Mammary epithelial cell (primary cell): ENCODE measurements at regions of chr1 and their contacts with region 1.

Region 1: DNA sequence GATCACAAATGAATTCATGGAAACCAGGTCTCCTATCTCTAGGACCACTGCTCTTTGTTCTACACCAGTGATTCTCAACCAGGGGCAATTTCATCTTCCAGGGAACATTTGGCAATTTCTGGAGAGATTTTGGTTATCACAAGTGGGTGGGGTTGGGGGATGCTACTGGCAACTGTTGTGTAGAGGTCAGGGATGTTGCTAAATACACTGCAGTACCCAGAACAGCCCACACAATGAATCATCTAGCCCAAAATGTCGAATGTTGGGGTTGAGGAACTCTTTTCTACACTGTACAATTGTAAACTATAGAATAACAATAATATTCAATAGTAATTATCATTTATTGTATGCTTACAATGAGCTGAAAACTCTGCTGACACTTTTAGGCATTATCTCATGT is 55.7 kb upstream of the UBE2U start:
- DNase-seq: no peak
- H3K4me3 ChIP-seq: no peak overlapping the region
- H3K27ac ChIP-seq: no peak overlapping the region
- H3K4me1 ChIP-seq: no peaks in the 10 kb centered on the region
- H3K27me3 ChIP-seq: no peaks in the 10 kb centered on the region
- CTCF ChIP-seq: no peak

Region 2: DNA sequence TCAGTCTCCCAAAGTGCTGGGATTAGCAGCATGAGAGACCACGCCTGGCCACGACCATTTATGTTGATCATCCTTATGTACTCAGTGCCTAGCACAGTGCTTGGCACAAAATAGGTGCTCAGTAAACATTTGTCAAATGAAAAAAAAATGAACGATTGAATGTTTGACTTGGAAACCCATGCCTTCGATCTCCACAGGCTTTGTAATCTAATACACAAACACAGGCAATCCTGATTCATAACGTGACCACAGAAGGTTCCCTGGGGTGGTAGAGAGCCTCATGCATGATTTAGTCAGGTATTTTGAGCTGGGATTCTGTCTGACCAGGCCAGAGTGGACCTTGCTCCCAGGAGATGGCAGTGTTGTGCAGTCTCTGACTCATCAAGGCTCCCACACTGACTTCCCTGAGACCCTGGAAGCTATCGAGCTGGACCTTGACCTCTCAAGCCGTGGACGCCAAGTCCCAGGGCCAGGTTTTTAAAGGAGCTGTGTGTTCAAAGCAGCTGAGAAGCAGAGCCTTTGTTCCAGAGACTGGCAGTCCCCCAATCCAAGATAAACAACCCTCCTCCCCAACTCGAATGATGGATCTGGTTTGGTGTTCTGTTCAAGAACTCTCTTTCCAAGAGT is 473.4 kb before region 1 on chr1:
- CTCF ChIA-PET with region 1: no interaction called
- dilution Hi-C with region 1: no loop called
- in situ Hi-C with region 1: loop called in 1 of 2 experiments (anchors 10 kb)
- intact Hi-C with region 1: no loop called
- DNase-seq: peak; percentile 85
- H3K4me3 ChIP-seq: no peak overlapping the region
- H3K27ac ChIP-seq: no peak overlapping the region
- H3K4me1 ChIP-seq: peaks cover 13% of the 10 kb centered on the region
- H3K27me3 ChIP-seq: no peaks in the 10 kb centered on the region
- CTCF ChIP-seq: peak; percentile 76 to 77

Region 3: DNA sequence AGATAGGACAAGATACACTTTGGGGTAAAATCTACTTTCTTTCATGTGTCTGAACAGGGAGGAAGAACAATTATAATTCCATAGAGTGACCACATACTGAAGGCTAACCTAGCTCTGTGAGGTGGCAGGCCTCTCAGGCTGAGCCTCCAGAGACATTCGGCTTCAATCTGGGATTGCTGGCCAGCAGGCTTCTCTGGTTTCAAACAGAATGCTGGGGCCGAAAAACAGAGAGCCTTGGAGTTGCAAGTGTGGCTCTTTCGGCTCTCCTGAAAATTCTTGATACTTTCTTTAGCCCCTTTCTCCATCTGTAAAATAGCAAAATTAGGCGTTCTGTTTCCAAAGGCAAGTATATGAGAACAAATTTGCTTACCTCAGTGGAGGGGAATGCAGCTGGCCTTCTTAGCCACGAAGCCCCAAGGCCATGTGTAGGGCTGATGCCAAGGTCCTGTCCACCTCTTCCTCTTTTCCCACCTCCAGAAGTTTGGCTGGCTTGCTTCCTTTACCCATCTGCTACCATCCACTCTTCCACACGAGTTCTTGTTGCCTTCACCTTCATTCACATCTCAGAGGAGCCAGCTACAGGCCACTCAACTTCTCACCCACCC is 25.7 kb after region 1 on chr1:
- CTCF ChIA-PET with region 1: no interaction called
- dilution Hi-C with region 1: no loop called
- in situ Hi-C with region 1: no loop called
- intact Hi-C with region 1: no loop called
- DNase-seq: no peak
- H3K4me3 ChIP-seq: no peak overlapping the region
- H3K27ac ChIP-seq: no peak overlapping the region
- H3K4me1 ChIP-seq: peaks cover 28% of the 10 kb centered on the region
- H3K27me3 ChIP-seq: no peaks in the 10 kb centered on the region
- CTCF ChIP-seq: no peak

Region 4: DNA sequence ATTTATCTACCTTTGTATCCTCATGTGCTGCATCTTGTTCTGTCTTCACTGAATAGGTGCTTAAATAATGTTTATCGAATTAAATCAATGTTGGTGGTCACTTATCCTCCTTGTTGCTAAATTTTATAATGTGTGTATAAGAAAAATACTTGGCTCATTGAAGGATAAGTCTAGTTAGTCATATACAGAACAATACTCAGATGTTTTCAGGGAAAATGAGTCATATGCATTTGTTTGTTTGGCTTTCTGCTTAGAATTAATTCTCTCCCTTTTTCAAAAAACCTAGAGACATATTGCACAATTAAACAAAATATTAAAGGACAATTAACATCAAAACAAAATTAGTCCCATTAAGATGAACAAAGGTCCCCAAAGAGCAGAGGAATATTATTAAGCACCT is 144.6 kb after region 1 on chr1:
- CTCF ChIA-PET with region 1: no interaction called
- dilution Hi-C with region 1: no loop called
- in situ Hi-C with region 1: no loop called
- intact Hi-C with region 1: no loop called
- DNase-seq: peak; percentile 63
- H3K4me3 ChIP-seq: no peak overlapping the region
- H3K27ac ChIP-seq: no peak overlapping the region
- H3K4me1 ChIP-seq: no peaks in the 10 kb centered on the region
- H3K27me3 ChIP-seq: no peaks in the 10 kb centered on the region
- CTCF ChIP-seq: no peak